CD4-positive, alpha-beta memory T cell (primary cell): ENCODE measurements at regions of chr5 and their contacts with region 1.

Region 1: DNA sequence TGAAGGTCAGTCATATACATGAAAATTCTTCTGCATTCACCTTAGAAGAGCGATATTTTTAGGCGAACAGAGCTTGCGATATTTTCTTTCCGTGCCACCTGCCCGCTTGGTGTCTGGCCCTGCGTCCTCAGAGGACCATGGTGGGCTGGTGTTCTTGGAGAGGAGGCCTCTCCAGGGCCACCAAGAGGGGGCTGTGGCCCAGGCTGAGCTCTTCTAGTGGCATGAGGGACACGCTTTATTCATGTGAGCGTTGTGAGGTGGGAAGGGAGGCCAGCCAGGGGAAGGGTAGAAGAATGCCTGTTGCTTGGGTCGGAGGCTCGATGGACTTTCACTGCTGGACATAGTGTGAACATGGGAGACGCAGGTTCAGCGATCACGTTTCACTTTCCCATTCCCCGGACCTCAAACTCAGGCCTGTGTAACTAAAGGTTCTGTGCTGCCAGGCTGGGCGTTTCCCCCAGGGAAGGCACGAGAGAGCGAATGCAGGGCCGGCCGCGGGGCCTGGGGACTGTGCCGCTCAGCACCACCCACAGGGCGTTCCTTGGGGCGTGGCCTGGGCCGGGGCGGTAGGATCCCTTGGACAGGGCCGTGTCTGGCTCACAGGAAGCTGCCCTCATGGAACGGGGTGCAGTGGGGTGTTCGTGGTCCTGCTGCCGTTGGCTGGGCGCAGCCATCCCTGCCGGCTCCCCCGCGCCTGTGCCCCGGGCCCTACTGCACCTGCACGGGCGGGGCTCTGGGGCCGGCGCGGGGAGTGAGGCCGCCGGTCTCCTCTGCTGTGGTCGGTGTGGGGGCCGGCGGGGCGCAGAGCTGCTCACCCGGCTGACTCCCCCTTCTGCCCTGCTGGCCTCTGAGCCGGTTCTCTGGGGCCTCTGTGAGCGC is 40.7 kb upstream of the CLPTM1L start:
- DNase-seq: peak; percentile 75 to 82 (median 76)
- H3K4me3 ChIP-seq: peak overlapping the region; percentile 69 to 70
- H3K4me3 Mint-ChIP-seq: peak overlapping the region; percentile 98 to 100 (median 99)
- H3K27ac ChIP-seq: peak overlapping the region; percentile 83
- H3K27ac Mint-ChIP-seq: peak overlapping the region; percentile 94 to 100 (median 100)
- H3K4me1 ChIP-seq: peaks cover 25% of the 10 kb centered on the region
- H3K4me1 Mint-ChIP-seq: peaks cover 20 to 39% (median 27%) of the 10 kb centered on the region in 4 donors
- H3K27me3 ChIP-seq: no peaks in the 10 kb centered on the region
- H3K27me3 Mint-ChIP-seq: no peaks in the 10 kb centered on the region

Region 2: GRCh38 chr5:1255081-1255561 is 130.5 kb before region 1 on chr5:
- CTCF ChIA-PET with region 1: interaction called, 8 read pairs
- POLR2A ChIA-PET with region 1: interaction called, 10 read pairs
- intact Hi-C with region 1: no loop called
- DNase-seq: peak; percentile 59 to 66 (median 64)
- H3K4me3 ChIP-seq: peak overlapping the region; percentile 12 to 34
- H3K4me3 Mint-ChIP-seq: peak overlapping the region; percentile 69 to 84 (median 82)
- H3K27ac ChIP-seq: no peak overlapping the region
- H3K27ac Mint-ChIP-seq: peak overlapping the region; percentile 36 to 81 (median 58)
- H3K4me1 ChIP-seq: peaks cover 18% of the 10 kb centered on the region
- H3K4me1 Mint-ChIP-seq: peaks cover 15 to 22% (median 17%) of the 10 kb centered on the region in 4 donors
- H3K27me3 ChIP-seq: no peaks in the 10 kb centered on the region
- H3K27me3 Mint-ChIP-seq: no peaks in the 10 kb centered on the region

Region 3: DNA sequence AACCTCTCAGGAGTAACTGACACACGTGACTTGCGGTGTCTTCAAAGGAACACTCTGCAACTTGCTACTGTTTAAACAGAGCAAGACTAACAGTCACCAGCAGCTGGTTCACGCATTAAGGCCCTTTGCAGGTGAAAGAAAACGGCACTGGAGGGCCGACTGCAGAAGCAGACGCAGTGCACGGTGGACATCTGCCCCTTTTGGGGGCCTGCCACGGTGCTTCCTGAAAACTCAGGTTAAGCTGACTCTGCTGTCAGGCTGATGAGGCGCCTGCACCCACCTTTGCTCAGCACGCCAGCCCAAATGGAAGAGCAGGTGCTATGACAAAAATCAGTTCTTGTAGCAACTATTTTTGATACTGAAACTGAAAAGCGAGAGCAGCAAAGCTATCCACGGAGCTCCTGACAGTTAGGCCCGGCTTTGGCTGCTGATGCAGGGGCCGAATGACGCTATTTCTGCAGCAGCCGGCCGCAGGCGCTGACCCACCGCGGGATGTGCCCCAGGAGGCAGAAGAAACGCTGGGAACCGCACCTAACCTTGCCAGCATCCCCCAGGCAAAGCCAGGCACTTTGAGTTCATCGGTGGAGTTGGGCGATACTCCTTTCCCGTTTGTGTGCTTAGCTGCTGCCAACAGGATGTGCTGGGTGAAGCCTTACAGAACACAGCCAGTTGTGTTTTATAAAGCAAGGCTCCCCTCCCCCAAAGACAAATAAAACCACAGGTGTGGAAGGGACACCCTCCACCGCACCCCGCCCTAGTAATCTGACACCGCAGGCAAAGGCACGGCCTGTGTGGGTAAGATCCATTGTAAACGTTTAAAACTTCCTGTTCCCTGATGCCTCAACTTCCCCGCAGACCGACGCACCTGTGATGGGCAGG is 69.7 kb before region 1 on chr5:
- CTCF ChIA-PET with region 1: no interaction called
- POLR2A ChIA-PET with region 1: interaction called, 22 read pairs
- intact Hi-C with region 1: loop called (anchors 1 kb)
- DNase-seq: peak; percentile 76 to 88 (median 78)
- H3K4me3 ChIP-seq: peak overlapping the region; percentile 53 to 62
- H3K4me3 Mint-ChIP-seq: peak overlapping the region; percentile 77 to 92 (median 84)
- H3K27ac ChIP-seq: peak overlapping the region; percentile 53
- H3K27ac Mint-ChIP-seq: peak overlapping the region; percentile 86 to 97 (median 94)
- H3K4me1 ChIP-seq: peaks cover 60% of the 10 kb centered on the region
- H3K4me1 Mint-ChIP-seq: peaks cover 46 to 67% (median 57%) of the 10 kb centered on the region in 4 donors
- H3K27me3 ChIP-seq: no peaks in the 10 kb centered on the region
- H3K27me3 Mint-ChIP-seq: no peaks in the 10 kb centered on the region

Region 4: DNA sequence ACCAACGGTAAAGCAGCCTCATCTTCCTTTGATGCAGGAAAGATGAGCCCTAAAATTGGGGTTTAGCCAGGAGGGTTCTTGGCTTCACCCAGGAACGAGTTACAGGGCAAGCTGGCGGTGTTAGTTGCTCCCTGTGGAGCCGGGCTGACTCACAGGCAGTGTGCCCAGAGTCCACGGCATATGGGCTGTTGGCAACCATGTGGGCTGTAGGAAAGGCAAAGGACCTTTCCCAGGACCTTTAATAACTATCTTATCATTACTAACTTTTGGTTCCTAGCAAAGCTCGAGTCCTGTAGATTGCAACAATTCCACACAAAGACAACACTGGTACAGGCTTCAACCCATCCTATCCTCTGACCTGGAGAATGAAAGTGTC is 11.0 kb before region 1 on chr5:
- CTCF ChIA-PET with region 1: interaction called, 6 read pairs
- POLR2A ChIA-PET with region 1: interaction called, 13 read pairs
- intact Hi-C with region 1: no loop called
- DNase-seq: no peak
- H3K4me3 ChIP-seq: no peak overlapping the region
- H3K4me3 Mint-ChIP-seq: no peak overlapping the region
- H3K27ac ChIP-seq: no peak overlapping the region
- H3K27ac Mint-ChIP-seq: no peak overlapping the region
- H3K4me1 ChIP-seq: no peaks in the 10 kb centered on the region
- H3K4me1 Mint-ChIP-seq: peaks cover 0 to 4% (median 0%) of the 10 kb centered on the region in 4 donors
- H3K27me3 ChIP-seq: no peaks in the 10 kb centered on the region
- H3K27me3 Mint-ChIP-seq: peaks cover 0 to 1% of the 10 kb centered on the region in 2 donors

Region 5: GRCh38 chr5:1431021-1431811 is 45.6 kb after region 1 on chr5:
- CTCF ChIA-PET with region 1: no interaction called
- POLR2A ChIA-PET with region 1: no interaction called
- intact Hi-C with region 1: no loop called
- DNase-seq: no peak
- H3K4me3 ChIP-seq: no peak overlapping the region
- H3K4me3 Mint-ChIP-seq: no peak overlapping the region
- H3K27ac ChIP-seq: no peak overlapping the region
- H3K27ac Mint-ChIP-seq: no peak overlapping the region
- H3K4me1 ChIP-seq: no peaks in the 10 kb centered on the region
- H3K4me1 Mint-ChIP-seq: no peaks in the 10 kb centered on the region
- H3K27me3 ChIP-seq: no peaks in the 10 kb centered on the region
- H3K27me3 Mint-ChIP-seq: peaks cover 7 to 8% of the 10 kb centered on the region in 2 donors

Region 6: DNA sequence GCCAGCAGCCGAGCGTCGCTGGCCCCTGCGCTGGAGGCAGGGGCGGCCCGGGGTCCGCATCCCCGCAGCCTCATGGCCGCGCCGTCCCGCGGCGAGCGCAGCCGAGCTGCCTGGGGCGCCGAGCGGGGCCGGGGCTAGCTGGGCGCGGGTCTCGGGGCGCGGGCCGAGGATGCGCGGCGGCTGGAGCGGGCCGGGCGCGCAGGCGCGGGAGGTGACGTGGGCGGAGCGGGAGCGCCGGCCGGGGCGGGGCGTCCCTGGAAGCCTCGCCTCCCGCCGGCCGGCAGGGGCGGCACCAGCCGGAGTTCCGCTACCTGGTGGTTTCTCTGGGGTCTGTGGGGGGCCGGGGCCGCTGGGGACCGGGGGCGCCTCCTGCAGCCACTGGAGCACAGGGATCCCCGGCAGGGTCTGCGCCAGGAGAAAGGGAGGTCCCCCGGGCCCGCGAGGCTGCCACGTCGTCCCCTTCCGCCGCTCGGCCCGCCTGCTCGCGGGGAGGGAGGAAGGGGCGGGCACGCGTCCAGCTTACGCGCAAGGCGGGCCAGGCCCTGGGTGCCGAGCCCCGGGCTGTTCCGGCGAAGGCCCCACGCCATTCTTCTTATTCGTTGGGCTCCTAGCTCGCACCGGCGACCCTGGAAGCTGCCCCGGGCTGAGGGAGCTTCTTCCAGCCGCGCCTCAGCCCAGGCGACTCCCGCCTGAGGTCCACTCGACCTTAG is 138.3 kb after region 1 on chr5 and contains the start of gene LPCAT1:
- CTCF ChIA-PET with region 1: no interaction called
- POLR2A ChIA-PET with region 1: interaction called, 24 read pairs
- intact Hi-C with region 1: loop called (anchors 1 kb)
- DNase-seq: peak; percentile 69 to 86 (median 79)
- H3K4me3 ChIP-seq: peak within 1 kb of the TSS; percentile 47 to 59
- H3K4me3 Mint-ChIP-seq: peak within 1 kb of the TSS; percentile 80 to 92 (median 88)
- H3K27ac ChIP-seq: peak within 1 kb of the TSS; percentile 70
- H3K27ac Mint-ChIP-seq: peak within 1 kb of the TSS in 6 of 7 donors; percentile 48 to 90 (median 72)
- H3K4me1 ChIP-seq: peaks cover 33% of the 10 kb centered on the region
- H3K4me1 Mint-ChIP-seq: peaks cover 13 to 33% (median 22%) of the 10 kb centered on the region in 4 donors
- H3K27me3 ChIP-seq: no peaks in the 10 kb centered on the region
- H3K27me3 Mint-ChIP-seq: no peaks in the 10 kb centered on the region
- total RNA-seq, gene LPCAT1: 62.8 to 63.6 TPM

Region 7: DNA sequence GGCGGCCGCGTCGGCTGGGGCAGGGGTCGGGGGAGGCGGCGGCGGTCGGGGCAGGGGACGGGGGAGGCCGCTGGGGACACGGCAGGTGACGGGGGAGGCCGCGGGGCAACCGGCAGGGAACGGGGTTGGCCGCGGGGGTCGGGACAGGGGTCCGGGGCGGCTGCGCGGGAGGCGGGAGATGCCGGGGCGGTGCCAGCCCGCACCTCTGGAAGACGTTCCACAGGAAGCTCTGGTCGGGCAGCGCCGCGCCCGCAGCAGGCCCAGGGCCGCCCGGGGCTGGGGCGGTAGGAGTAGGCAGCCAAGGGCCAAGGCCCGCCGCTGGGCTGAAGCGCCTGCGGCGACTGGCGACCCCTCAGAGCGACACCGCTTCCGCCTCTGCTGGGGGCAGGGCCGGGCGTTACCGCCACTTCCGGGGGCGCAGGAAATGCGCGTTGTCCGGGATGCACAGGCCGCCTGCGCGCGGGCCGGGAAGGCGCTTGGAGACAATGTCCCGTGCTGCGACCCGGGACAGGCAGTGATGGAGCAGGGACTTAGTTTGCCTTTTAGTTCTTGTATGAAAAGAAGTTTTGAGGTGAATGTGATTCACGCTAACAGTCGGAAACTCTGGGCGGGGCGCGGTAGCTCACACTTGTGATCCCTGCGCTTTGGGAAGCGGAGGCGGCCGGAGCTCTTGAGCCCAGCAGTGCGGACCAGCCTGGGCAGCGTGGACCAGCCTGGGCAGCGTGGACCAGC is 248.1 kb after region 1 on chr5:
- CTCF ChIA-PET with region 1: no interaction called
- POLR2A ChIA-PET with region 1: interaction called, 16 read pairs
- intact Hi-C with region 1: no loop called
- DNase-seq: peak; percentile 54 to 69 (median 64)
- H3K4me3 ChIP-seq: peak overlapping the region; percentile 58 to 65
- H3K4me3 Mint-ChIP-seq: peak overlapping the region; percentile 90 to 96 (median 94)
- H3K27ac ChIP-seq: peak overlapping the region; percentile 56
- H3K27ac Mint-ChIP-seq: peak overlapping the region; percentile 72 to 96 (median 92)
- H3K4me1 ChIP-seq: peaks cover 8% of the 10 kb centered on the region
- H3K4me1 Mint-ChIP-seq: peaks cover 16 to 41% (median 27%) of the 10 kb centered on the region in 4 donors
- H3K27me3 ChIP-seq: no peaks in the 10 kb centered on the region
- H3K27me3 Mint-ChIP-seq: no peaks in the 10 kb centered on the region

Region 8: DNA sequence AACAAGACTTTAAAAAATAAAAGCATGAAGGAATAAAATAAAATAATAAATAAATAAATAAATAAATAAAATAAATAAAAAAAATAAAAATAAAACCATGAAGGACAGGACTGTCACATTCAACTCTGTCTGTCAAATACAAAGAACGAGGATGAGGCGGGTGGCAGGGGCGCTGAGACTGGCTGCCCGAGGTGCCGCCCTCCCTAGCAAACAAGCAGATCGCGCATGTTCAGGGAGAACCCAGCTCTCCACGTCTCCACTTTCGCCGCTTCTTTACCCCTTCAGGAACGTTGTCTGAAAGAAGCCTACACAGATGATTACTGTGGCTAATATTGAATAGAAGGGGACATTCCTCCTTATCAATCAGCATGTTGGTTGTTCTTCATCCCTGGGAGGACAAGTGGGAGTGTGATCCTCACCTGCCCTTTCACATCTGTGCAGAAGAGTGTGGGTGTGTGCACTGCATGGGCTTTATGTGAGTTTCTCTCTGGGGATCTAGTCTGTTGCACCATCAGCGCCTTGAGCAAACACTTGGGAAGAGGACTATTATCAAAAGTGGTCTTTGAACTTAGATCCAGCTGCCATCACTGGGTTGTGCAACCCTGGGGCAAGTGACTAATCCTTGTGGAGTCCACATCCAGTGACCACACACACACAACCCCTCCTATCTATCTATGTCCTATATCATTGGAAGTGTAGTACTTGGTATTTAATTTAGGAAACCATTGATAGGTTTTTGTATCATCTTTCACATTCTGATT is 966.6 kb after region 1 on chr5:
- CTCF ChIA-PET with region 1: no interaction called
- POLR2A ChIA-PET with region 1: no interaction called
- intact Hi-C with region 1: no loop called
- DNase-seq: no peak
- H3K4me3 ChIP-seq: no peak overlapping the region
- H3K4me3 Mint-ChIP-seq: no peak overlapping the region
- H3K27ac ChIP-seq: no peak overlapping the region
- H3K27ac Mint-ChIP-seq: no peak overlapping the region
- H3K4me1 ChIP-seq: no peaks in the 10 kb centered on the region
- H3K4me1 Mint-ChIP-seq: no peaks in the 10 kb centered on the region
- H3K27me3 ChIP-seq: no peaks in the 10 kb centered on the region
- H3K27me3 Mint-ChIP-seq: peaks cover 0 to 3% of the 10 kb centered on the region in 2 donors